ENCODE measurements at regions of chrX and their contacts with region 1.

Region 1: DNA sequence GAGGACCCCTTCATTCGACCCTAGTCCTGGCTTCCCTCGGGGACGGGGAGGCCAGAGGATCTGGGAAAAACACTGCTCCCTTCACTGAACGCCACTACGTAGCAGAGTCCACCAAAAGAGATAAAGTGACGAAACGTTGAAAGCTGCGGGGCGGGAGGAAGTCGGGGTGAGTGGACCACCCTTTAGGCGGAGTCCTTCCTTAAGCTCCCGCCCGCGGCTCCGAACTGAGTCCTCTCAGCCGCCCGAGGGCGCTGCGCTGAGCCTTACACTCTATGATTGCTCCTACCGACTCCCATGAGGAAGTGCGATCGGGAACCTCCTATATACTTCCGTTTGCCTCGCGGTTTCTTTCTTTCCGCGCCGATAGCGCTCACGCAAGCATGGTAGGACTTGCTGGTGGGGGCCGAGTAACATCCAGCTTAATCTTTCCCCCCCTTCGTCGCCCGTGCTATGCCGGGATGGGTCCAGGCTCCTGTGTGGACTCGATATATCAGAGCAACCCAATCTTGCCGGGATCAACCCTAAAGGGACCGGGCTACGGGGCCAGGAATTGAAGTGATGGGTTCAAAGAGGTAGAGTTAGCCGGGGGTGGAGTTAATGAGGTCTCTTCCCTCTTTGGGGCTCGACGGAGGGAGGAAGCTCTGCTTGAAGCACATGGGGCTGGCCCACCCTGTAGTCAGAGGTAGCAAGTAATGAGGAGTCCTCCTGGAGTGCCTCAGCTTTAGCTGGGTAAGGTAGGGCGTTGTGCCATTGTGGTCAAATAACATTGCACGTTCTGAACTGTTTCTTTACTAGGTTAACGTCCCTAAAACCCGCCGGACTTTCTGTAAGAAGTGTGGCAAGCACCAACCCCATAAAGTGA is at the start of gene RPL36A:
- H3K4me3 Mint-ChIP-seq: peak within 1 kb of the TSS; percentile 91
- H3K27ac Mint-ChIP-seq: peak within 1 kb of the TSS; percentile 92
- H3K4me1 Mint-ChIP-seq: peaks cover 28% of the 10 kb centered on the region
- H3K27me3 Mint-ChIP-seq: no peaks in the 10 kb centered on the region

Region 2: GRCh38 chrX:101348452-101349192 is 42.3 kb before region 1 on chrX and contains the start of gene TIMM8A:
- intact Hi-C with region 1: loop called (anchors 2 kb)
- H3K4me3 Mint-ChIP-seq: peak within 1 kb of the TSS; percentile 88
- H3K27ac Mint-ChIP-seq: peak within 1 kb of the TSS; percentile 92
- H3K4me1 Mint-ChIP-seq: no peaks in the 10 kb centered on the region
- H3K27me3 Mint-ChIP-seq: no peaks in the 10 kb centered on the region

Region 3: DNA sequence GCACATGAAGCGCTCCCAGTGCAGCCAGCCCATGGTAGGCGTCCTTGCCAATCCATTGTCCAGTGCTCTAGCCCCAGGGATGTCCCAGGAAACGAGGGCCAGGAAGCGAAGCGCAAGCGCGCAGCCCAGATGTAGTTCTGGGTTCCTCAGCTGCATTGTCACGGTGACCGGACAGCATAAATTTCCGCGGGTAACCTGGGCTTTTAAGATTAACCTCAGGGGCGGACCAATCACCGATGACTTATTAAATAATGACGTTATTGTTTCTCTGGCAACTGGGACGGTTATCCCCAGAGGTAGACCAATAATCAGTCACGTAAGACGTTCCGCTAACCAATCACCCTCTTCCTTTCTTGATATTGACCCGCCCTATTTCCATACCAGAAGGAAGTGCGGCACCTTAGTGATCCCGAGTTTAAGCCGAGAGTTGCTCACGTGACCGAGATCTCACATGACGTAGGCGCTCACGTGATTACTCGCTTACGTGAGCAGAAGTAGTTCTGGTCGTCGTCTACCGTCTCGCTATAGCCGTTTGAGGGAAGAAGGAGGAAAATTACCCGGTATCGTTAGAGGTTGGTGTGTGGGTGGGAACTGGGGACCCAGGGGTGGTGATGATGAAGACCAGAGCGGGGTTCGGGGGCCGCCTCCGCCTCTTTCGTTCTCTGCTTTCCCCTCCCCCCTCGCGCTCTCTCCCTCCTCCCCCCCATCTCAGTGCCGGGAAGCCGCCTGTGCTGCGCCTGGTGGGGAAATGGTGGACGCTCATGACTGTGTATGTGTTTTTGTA is 17.0 kb after region 1 on chrX and contains the starts of genes GLA and HNRNPH2:
- intact Hi-C with region 1: loop called (anchors 2 kb)
- H3K4me3 Mint-ChIP-seq: peak within 1 kb of the TSS; percentile 94
- H3K27ac Mint-ChIP-seq: peak within 1 kb of the TSS; percentile 97
- H3K4me1 Mint-ChIP-seq: peaks cover 21% of the 10 kb centered on the region
- H3K27me3 Mint-ChIP-seq: no peaks in the 10 kb centered on the region

Measured in dendritic cell treated with granulocyte-macrophage colony-stimulating factor and Interleukin-4, amounts not matched to agents 40 ng/mL and 50 ng/mL, for 4 days (primary cell).